Gastrocnemius medialis (tissue), 4 donors: ENCODE measurements at regions of chr5 and their contacts with region 1.

Region 1: DNA sequence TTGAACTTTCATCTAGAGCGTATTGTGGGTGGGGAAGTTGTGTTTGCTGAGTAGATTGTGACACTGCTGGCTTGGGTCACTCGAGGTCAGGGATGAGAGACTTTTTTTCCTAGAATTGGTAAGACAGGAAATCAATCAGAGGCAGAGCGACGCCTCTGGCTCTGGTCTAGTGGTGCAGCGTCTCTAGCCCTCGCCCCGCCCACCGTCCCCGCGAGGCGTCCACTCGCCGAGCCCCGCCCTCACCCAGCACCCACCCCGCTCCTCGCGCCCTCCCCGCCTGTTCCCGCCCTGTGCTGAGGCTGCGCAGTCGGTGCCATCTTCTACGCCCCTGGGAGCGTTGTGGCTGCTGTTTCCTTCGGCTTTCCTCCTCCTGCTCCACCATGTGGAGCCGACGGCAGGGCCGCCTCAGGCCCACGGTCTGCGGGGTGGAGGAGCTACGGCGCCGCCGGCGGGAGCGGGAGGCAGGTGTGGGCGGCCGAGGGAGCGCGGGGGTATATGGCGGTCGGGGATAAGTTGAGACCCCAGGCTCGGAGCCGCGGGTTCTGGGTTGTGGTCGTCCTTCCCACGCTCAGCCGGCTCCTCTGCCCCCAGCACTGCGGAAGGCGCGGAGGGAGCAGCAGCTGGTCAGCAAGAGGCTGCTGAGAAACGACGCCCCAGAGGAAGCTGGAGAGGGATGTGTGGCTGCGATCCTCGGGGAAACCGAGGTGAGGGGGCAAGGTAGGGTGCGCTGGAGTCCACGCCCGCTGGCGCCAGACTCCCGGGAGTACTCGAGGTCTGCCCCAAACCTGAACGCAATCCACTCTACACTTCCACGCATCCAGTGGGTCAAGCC is at the start of gene TMCO6:
- DNase-seq: peak; percentile 96
- ATAC-seq: peak; percentile 94
- H3K4me3 ChIP-seq: peak within 1 kb of the TSS; percentile 78 to 96 (median 86)
- H3K27ac ChIP-seq: peak within 1 kb of the TSS; percentile 90 to 97 (median 91)
- H3K4me1 ChIP-seq: peaks cover 11% of the 10 kb centered on the region in 2 donors
- H3K27me3 ChIP-seq: no peaks in the 10 kb centered on the region
- CTCF ChIP-seq: peak; percentile 49 to 77 (median 53)
- POLR2A ChIP-seq: peak; percentile 57 to 70
- total RNA-seq, gene TMCO6: 5.1 to 15.4 (median 9.5) TPM

Region 2: GRCh38 chr5:140372971-140373487 is 266.3 kb before region 1 on chr5:
- in situ Hi-C with region 1: no loop called
- intact Hi-C with region 1: loop called (anchors 5 kb)
- DNase-seq: peak in 1 of 2 donors; percentile 62
- ATAC-seq: peak; percentile 71 to 81
- H3K4me3 ChIP-seq: no peak overlapping the region
- H3K27ac ChIP-seq: no peak overlapping the region
- H3K4me1 ChIP-seq: no peaks in the 10 kb centered on the region
- H3K27me3 ChIP-seq: no peaks in the 10 kb centered on the region
- CTCF ChIP-seq: peak; percentile 55 to 84 (median 80)
- POLR2A ChIP-seq: no peak

Region 3: GRCh38 chr5:140547508-140548299 is 91.7 kb before region 1 on chr5 and contains the start of gene EIF4EBP3:
- in situ Hi-C with region 1: loop called in 2 of 4 experiments (anchors 10 kb)
- intact Hi-C with region 1: loop called (anchors 2 kb)
- DNase-seq: peak; percentile 96 to 98
- ATAC-seq: peak; percentile 71 to 75
- H3K4me3 ChIP-seq: peak within 1 kb of the TSS; percentile 54 to 79 (median 78)
- H3K27ac ChIP-seq: peak within 1 kb of the TSS; percentile 92 to 100 (median 100)
- H3K4me1 ChIP-seq: peaks cover 46 to 52% of the 10 kb centered on the region in 2 donors
- H3K27me3 ChIP-seq: no peaks in the 10 kb centered on the region
- CTCF ChIP-seq: peak; percentile 64 to 95 (median 80)
- POLR2A ChIP-seq: peak; percentile 92 to 98
- total RNA-seq, gene EIF4EBP3: 38.6 to 118 (median 51.8) TPM

Region 4: GRCh38 chr5:140564196-140565023 is 75.0 kb before region 1 on chr5 and contains the starts of genes APBB3 and SLC35A4:
- in situ Hi-C with region 1: loop called in 1 of 4 experiments (anchors 5 kb)
- intact Hi-C with region 1: loop called (anchors 2 kb)
- DNase-seq: peak; percentile 98 to 99
- ATAC-seq: peak; percentile 85 to 92
- H3K4me3 ChIP-seq: peak within 1 kb of the TSS; percentile 77 to 92 (median 84)
- H3K27ac ChIP-seq: peak within 1 kb of the TSS; percentile 97 to 99 (median 98)
- H3K4me1 ChIP-seq: peaks cover 62% of the 10 kb centered on the region in 2 donors
- H3K27me3 ChIP-seq: no peaks in the 10 kb centered on the region
- CTCF ChIP-seq: no peak
- POLR2A ChIP-seq: peak; percentile 92
- total RNA-seq, gene APBB3: 4.1 to 12.5 (median 9.0) TPM
- total RNA-seq, gene SLC35A4: 71.7 to 152 (median 114) TPM

Region 5: DNA sequence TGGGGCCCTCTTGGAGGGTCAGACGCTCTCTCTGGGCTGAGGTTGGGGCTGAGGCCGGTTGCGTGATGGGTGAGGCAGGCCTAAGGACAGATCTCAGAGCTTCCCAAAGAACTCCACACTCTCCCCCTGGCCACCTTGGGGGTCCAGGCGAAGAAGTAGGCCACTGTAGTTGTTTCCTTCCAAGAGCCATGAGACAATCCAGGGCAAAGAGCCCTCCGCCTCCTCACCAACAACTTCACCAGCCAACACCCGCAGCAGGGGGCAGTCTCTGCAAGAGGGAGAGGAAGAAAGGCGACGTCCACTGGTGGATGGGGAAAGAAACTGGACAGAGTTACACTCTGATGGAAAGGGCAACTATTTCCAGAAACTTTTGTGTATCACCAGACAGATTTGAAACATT is 64.1 kb before region 1 on chr5:
- in situ Hi-C with region 1: loop called in 3 of 4 experiments (anchors 5 to 10 kb)
- intact Hi-C with region 1: no loop called
- DNase-seq: peak in 1 of 2 donors; percentile 63
- ATAC-seq: peak in 1 of 2 donors; percentile 66
- H3K4me3 ChIP-seq: no peak overlapping the region
- H3K27ac ChIP-seq: peak overlapping the region in 1 of 4 donors; percentile 63
- H3K4me1 ChIP-seq: peaks cover 28% of the 10 kb centered on the region in 2 donors
- H3K27me3 ChIP-seq: no peaks in the 10 kb centered on the region
- CTCF ChIP-seq: peak in 2 of 5 experiments; percentile 34 to 36
- POLR2A ChIP-seq: no peak

Region 6: GRCh38 chr5:140588311-140589070 is 50.9 kb before region 1 on chr5:
- in situ Hi-C with region 1: loop called in 1 of 4 experiments (anchors 10 kb)
- intact Hi-C with region 1: no loop called
- DNase-seq: no peak
- ATAC-seq: peak; percentile 46 to 87
- H3K4me3 ChIP-seq: no peak overlapping the region
- H3K27ac ChIP-seq: peak overlapping the region in 2 of 4 donors; percentile 0 to 33
- H3K4me1 ChIP-seq: peaks cover 8 to 13% of the 10 kb centered on the region in 2 donors
- H3K27me3 ChIP-seq: no peaks in the 10 kb centered on the region
- CTCF ChIP-seq: no peak
- POLR2A ChIP-seq: no peak

Region 7: DNA sequence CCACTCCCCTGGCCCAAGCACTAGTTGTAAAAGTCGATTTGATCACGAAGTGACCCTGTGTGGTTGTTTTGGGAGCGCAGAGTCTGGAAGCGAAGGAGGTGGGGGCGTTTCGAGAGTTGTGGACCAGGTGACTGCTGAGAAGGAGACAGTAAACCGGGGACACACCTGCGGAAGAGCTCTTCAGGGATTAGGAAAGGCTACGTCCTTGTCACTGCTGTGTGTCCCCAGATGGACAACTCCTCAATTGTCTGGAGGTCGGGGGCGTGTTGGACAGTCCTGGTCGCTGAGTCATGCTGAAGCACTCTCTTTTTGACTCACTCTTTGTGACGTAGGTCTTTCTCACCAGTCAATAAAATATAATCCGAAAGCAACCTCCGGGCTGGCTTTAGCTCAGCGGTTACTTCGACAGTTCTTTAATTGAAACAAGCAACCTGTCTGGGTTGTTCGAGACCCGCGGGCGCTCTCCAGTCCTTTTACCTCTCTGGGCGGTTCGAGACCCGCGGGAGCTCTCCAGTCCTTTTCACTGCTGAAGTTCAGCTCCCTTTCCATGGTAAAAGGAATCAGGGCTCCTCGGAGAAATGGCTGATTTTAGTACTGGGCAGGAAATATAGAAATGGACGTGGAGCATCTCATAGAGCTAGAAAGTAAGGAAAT is 71.7 kb after region 1 on chr5:
- in situ Hi-C with region 1: no loop called
- intact Hi-C with region 1: loop called (anchors 2 kb)
- DNase-seq: peak; percentile 79 to 88
- ATAC-seq: peak; percentile 92 to 95
- H3K4me3 ChIP-seq: peak overlapping the region; percentile 57 to 66 (median 62)
- H3K27ac ChIP-seq: peak overlapping the region; percentile 82 to 91 (median 86)
- H3K4me1 ChIP-seq: peaks cover 0 to 13% of the 10 kb centered on the region in 2 donors
- H3K27me3 ChIP-seq: no peaks in the 10 kb centered on the region
- CTCF ChIP-seq: no peak
- POLR2A ChIP-seq: peak; percentile 56 to 63